ENCODE measurements at regions of chr9 and their contacts with region 1.

Region 1: DNA sequence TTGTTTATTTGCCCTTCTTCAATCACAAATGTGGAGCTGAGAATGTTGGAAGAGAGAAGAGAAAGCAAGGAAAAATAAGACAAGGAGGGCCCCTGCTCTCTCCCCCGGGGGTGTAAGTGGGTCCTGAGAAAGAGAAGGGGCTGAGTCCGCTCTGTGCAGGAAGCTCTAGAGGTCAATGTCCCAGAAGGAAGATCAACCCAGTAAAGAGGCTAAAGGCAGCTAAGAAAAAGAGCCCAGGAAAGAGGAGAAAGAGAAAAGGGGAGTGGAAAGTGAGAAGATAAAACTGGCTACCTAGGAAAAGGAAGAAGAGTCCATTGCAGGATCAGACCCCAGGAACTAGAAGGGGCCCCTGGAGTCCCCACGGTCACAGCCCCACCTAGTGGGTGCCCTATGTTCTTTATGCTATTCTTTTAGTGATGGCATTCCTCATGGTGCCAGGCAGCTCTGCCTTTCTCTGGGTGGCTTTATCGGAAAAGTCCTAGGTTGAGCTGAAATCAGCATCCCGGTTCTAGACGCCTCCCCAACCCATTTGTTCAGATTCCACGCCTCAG is 583.4 kb downstream of the ACTL7B start:
- DNase-seq: peak; percentile 61 to 71
- ATAC-seq: peak; percentile 79 to 95
- H3K4me3 ChIP-seq: no peak overlapping the region
- H3K27ac ChIP-seq: peak overlapping the region; percentile 48 to 77
- H3K4me1 ChIP-seq: peaks cover 25% of the 10 kb centered on the region
- CTCF ChIP-seq: peak; percentile 71
- EP300 ChIP-seq: no peak
- POLR2A ChIP-seq: no peak
- RAD21 ChIP-seq: peak; percentile 85 to 86

Region 2: GRCh38 chr9:107484117-107484723 is 788.2 kb before region 1 on chr9:
- CTCF ChIA-PET with region 1: interaction called, 20 read pairs
- POLR2A ChIA-PET with region 1: no interaction called
- DNase-seq: peak; percentile 51 to 84
- ATAC-seq: peak; percentile 57 to 68; a peak in 4 of 6 replicates
- H3K4me3 ChIP-seq: no peak overlapping the region
- H3K27ac ChIP-seq: no peak overlapping the region
- H3K4me1 ChIP-seq: peaks cover 19% of the 10 kb centered on the region
- CTCF ChIP-seq: peak; percentile 83
- EP300 ChIP-seq: no peak
- POLR2A ChIP-seq: no peak
- RAD21 ChIP-seq: peak; percentile 94 to 97

Region 3: DNA sequence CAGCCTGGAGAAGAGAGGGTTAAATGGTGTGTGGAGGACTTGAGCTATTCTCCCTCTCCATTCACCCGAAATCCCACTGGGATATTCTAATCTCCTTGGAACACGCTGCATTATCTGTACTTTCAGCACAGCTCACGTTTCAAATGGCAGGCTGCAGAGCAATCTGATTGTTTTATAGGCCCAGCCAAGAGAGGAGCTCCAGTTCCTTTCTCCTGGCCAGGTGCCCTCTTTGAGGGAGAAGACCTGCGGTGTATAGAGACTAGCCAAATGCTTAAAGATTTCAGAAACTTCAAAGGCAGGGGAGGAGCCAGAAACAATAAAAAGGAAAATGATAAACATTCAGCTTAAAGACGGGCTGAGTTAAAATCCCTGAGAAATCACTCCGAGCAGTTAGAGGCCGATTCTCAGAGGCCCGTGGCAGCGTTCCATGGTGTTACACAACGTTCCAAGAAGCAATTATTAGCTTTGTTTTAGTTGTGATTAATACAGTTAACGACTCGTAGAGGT is 218.8 kb before region 1 on chr9:
- CTCF ChIA-PET with region 1: interaction called, 12 read pairs
- POLR2A ChIA-PET with region 1: interaction called, 3 read pairs
- DNase-seq: no peak
- ATAC-seq: no peak
- H3K4me3 ChIP-seq: no peak overlapping the region
- H3K27ac ChIP-seq: peak overlapping the region; percentile 15 to 88; a peak in 4 of 6 replicates
- H3K4me1 ChIP-seq: peaks cover 51% of the 10 kb centered on the region
- CTCF ChIP-seq: no peak
- EP300 ChIP-seq: no peak
- POLR2A ChIP-seq: no peak
- RAD21 ChIP-seq: no peak

Region 4: DNA sequence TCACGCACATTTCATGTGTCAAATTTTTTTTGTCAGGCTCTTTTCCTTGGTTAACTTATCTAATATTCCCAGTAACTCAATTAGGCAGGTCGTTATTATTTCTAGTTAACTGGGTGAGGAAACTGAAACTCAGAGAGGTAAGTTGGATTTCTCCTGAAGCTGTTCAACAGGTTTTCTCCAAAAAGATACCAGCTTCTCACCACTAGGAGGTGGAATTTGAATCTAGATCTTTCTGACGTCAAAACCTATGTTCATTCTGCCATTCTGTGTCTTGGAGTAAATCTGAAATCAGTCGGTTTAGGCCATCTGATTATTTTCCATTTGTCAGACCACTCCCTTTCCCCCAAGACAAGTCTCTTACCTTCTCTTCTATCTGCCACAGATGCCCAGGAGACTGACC is 10.4 kb after region 1 on chr9:
- CTCF ChIA-PET with region 1: interaction called, 49 read pairs
- POLR2A ChIA-PET with region 1: no interaction called
- DNase-seq: no peak
- ATAC-seq: no peak
- H3K4me3 ChIP-seq: no peak overlapping the region
- H3K27ac ChIP-seq: no peak overlapping the region
- H3K4me1 ChIP-seq: no peaks in the 10 kb centered on the region
- CTCF ChIP-seq: 0 out of 3 replicates have a peak, but pooled peaks have one; percentile 14
- EP300 ChIP-seq: no peak
- POLR2A ChIP-seq: no peak
- RAD21 ChIP-seq: no peak

Region 5: DNA sequence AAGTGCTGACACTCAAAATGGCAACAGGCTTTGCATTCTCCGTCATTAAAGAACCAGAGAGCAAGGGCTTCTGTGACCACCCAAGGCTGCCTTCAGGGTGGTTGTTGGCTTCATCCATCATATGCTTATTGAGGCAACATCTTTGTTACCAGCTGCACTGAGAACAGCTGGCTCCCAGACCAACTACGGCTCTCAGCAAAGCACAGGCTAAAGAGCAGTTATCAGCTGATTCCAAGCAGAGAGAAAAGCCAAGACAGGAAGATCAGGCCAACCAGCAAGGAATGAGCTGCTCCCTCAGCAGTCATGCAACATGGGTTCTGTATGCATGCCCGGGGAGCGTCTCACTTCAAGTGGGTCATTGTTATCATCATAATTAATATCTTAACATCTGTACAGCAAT is 224.4 kb after region 1 on chr9:
- CTCF ChIA-PET with region 1: no interaction called
- POLR2A ChIA-PET with region 1: no interaction called
- DNase-seq: no peak
- ATAC-seq: no peak
- H3K4me3 ChIP-seq: no peak overlapping the region
- H3K27ac ChIP-seq: no peak overlapping the region
- H3K4me1 ChIP-seq: no peaks in the 10 kb centered on the region
- CTCF ChIP-seq: no peak
- EP300 ChIP-seq: no peak
- POLR2A ChIP-seq: no peak
- RAD21 ChIP-seq: no peak

Region 6: DNA sequence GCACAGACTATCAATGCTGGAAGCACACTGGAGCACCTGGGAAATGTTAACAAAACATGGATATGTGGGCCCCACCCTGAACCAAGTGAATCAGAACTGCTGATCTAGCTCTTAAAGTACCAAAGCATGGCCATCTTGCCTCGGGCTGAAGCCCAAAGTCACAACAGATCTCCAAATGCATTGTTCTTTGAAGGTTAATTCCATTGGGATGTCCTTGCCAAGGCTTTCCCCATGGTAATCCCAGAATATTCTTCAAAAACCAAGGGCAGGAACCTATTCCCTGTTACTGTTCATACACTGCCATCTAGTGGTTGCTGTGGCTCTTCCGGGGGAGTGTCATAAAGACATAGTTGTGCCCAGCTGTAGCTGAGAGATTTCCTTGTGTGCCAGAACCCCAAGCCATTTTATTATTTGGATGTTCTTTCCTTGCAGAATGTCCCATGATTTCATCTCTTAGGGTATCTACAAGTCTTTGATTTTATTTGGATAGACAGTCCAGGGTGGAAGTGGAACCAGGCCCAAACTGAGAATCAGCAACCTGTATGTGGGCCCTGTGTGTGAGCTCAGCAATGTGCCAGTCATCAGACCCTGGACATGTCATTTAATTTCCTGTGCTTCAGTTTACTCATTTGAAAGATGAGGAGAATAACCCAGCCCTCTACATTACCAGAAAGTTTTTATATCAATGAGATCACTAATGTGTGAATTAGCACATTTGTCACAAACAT is 293.4 kb after region 1 on chr9:
- CTCF ChIA-PET with region 1: interaction called, 16 read pairs
- POLR2A ChIA-PET with region 1: no interaction called
- DNase-seq: peak; percentile 82 to 83
- ATAC-seq: peak; percentile 95 to 99
- H3K4me3 ChIP-seq: no peak overlapping the region
- H3K27ac ChIP-seq: peak overlapping the region; percentile 25 to 29; a peak in 2 of 6 replicates
- H3K4me1 ChIP-seq: peaks cover 14% of the 10 kb centered on the region; the same call in 1 of the 3 replicates
- CTCF ChIP-seq: peak; percentile 92
- EP300 ChIP-seq: no peak
- POLR2A ChIP-seq: no peak
- RAD21 ChIP-seq: peak; percentile 98